B cell (primary cell): ENCODE measurements at regions of chr17 and their contacts with region 1.

Region 1: GRCh38 chr17:47323382-47324222 is at the start of gene EFCAB13:
- DNase-seq: peak; percentile 95
- ATAC-seq: peak; percentile 81
- H3K4me3 ChIP-seq: peak within 1 kb of the TSS; percentile 74 to 99 (median 91)
- H3K4me3 Mint-ChIP-seq: peak within 1 kb of the TSS; percentile 100
- H3K27ac ChIP-seq: peak within 1 kb of the TSS; percentile 97 to 99
- H3K27ac Mint-ChIP-seq: peak within 1 kb of the TSS; percentile 99
- H3K4me1 ChIP-seq: peaks cover 11 to 15% of the 10 kb centered on the region in 2 donors
- H3K4me1 Mint-ChIP-seq: peaks cover 25% of the 10 kb centered on the region
- H3K27me3 ChIP-seq: no peaks in the 10 kb centered on the region
- H3K27me3 Mint-ChIP-seq: no peaks in the 10 kb centered on the region
- CTCF ChIP-seq: peak; percentile 45
- total RNA-seq, gene EFCAB13: 86.5 and 88.4 TPM in 2 replicates

Region 2: GRCh38 chr17:46922804-46923635 is 400.6 kb before region 1 on chr17 and contains the start of gene GOSR2:
- CTCF ChIA-PET with region 1: no interaction called
- POLR2A ChIA-PET with region 1: no interaction called
- intact Hi-C with region 1: loop called (anchors 5 kb)
- DNase-seq: peak; percentile 98
- ATAC-seq: peak; percentile 94
- H3K4me3 ChIP-seq: peak within 1 kb of the TSS; percentile 87 to 98 (median 97)
- H3K4me3 Mint-ChIP-seq: peak within 1 kb of the TSS; percentile 98
- H3K27ac ChIP-seq: peak within 1 kb of the TSS; percentile 94 to 98
- H3K27ac Mint-ChIP-seq: peak within 1 kb of the TSS; percentile 100
- H3K4me1 ChIP-seq: peaks cover 16% of the 10 kb centered on the region in 2 donors
- H3K4me1 Mint-ChIP-seq: peaks cover 55% of the 10 kb centered on the region
- H3K27me3 ChIP-seq: no peaks in the 10 kb centered on the region
- H3K27me3 Mint-ChIP-seq: no peaks in the 10 kb centered on the region
- CTCF ChIP-seq: no peak
- total RNA-seq, gene GOSR2: 91.0 and 95.2 TPM in 2 replicates

Region 3: DNA sequence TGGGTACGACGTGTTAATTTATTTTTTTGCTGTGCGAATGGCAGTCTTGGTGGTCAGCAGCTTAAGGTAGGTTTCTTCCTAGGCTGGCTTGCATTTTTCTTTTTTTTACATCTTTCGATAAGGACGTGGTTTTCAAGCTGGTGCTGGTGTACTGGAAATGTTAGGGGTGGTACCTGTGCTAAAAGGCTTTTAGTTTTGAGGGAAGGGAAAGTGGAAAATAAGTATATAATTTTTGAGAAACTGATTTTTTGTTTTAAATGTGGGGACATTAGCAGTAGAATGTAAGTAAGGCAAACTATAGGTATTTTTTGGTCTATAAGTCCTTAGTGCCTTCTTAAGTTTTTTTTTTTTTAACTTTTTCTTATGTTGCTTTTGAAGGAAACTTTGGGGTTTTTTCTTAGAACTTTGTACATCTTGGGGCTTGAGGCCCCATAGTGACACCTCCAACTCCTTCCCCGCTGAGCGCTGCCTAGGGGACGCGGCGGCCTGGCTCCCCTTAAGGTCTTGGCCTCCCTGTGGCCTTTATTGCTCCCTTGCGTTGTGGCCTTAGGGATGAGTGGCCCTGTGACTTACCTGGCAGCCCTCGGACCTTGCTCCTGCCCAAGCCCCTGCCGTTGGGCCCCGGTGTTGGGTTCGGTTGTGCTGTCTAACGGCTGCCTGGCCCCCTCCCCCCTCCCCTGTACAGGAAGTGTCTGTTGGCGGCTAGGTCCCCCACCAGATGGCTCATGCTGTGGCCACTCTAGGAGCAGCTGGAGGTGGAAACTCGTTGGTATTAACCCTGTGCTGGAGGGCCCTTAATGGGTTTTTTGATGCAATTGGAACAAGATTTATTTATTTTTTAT is 256.5 kb before region 1 on chr17:
- CTCF ChIA-PET with region 1: no interaction called
- POLR2A ChIA-PET with region 1: no interaction called
- intact Hi-C with region 1: loop called (anchors 5 kb)
- DNase-seq: peak; percentile 91
- ATAC-seq: peak; percentile 99
- H3K4me3 ChIP-seq: peak overlapping the region; percentile 65 to 95 (median 90)
- H3K4me3 Mint-ChIP-seq: peak overlapping the region; percentile 98
- H3K27ac ChIP-seq: peak overlapping the region; percentile 75 to 93
- H3K27ac Mint-ChIP-seq: peak overlapping the region; percentile 97
- H3K4me1 ChIP-seq: peaks cover 11 to 12% of the 10 kb centered on the region in 2 donors
- H3K4me1 Mint-ChIP-seq: peaks cover 36% of the 10 kb centered on the region
- H3K27me3 ChIP-seq: no peaks in the 10 kb centered on the region
- H3K27me3 Mint-ChIP-seq: no peaks in the 10 kb centered on the region
- CTCF ChIP-seq: no peak

Region 4: DNA sequence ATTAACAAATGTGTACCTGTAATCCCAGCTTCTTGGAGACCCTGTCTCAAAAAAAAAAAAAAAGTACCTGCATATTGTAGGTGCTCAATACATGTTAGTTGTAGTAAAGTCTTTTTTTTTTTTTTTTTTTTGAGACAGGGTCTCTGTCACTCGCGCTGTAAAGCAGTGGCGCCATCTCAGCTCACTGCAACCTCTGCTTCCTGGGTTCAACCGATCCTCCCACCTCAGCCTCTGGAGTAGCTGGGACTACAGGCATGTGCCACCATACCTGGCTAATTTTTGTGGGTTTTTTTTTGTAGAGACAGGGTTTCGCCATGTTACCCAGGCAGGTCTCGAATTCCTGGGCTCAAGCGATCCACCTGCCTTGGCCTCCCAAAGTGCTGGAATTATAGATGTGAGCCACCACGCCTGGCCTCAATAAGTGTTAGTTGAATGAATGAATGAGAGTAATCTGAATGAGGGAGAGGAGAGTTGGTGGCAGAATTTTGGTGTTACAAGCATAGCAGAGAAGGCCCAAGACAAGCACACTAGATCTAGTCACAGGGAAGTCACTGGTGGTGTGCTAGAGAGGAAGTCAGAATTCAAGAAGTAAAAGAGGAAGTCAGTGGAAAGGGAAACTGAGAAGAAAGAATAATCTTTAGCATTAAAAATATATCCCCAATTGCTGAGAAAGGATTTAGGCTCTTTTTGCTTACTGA is 123.8 kb before region 1 on chr17:
- CTCF ChIA-PET with region 1: interaction called, 3 read pairs
- POLR2A ChIA-PET with region 1: interaction called, 3 read pairs
- intact Hi-C with region 1: loop called (anchors 1 kb)
- DNase-seq: peak; percentile 79
- ATAC-seq: peak; percentile 67
- H3K4me3 ChIP-seq: peak overlapping the region; percentile 21 to 45 (median 41)
- H3K4me3 Mint-ChIP-seq: peak overlapping the region; percentile 80
- H3K27ac ChIP-seq: peak overlapping the region; percentile 82 to 90
- H3K27ac Mint-ChIP-seq: peak overlapping the region; percentile 96
- H3K4me1 ChIP-seq: peaks cover 40 to 46% of the 10 kb centered on the region in 2 donors
- H3K4me1 Mint-ChIP-seq: peaks cover 42% of the 10 kb centered on the region
- H3K27me3 ChIP-seq: no peaks in the 10 kb centered on the region
- H3K27me3 Mint-ChIP-seq: no peaks in the 10 kb centered on the region
- CTCF ChIP-seq: no peak

Region 5: DNA sequence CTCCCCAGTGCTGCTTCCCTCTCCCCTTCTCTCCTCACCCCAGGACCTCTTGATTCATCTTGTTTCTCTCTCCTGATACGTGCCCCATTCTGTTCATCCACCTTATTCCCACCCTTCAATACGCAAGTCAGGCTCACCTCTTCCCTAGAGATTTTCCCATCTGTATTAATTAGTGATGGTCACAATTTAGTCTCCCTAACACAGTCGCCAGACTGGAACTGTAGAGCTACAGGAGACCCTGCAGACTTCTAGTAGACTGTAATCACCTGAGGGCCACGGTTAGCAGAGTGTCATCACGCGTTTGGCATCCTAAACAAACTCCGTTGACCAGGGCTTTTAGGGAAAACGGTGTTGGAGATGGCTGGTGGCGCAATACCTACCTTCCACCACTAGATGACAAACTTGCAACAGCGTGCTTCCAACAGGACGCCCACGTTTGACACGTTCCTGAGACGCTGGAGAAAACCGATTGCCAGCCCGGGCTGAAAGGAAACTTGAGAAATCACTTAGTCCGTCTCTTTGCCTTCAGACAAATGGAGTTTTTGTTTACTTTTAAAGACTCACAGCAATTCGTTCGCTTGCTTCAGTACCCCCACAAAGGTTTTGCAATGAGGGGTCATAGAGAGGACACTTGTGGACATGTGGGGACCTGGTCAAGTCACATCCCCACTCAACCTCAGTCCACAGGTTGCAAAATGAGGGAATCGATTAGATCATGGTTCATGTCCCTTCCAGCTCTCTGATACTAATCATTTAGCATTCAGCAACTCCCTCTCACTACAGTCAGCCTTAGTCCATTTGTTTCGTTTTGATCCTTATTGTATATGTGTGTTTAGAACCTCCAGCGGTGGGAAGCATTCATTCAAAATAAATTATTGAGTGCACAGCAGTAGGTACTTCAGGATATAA is 93.8 kb before region 1 on chr17:
- CTCF ChIA-PET with region 1: interaction called, 37 read pairs
- POLR2A ChIA-PET with region 1: interaction called, 3 read pairs
- intact Hi-C with region 1: no loop called
- DNase-seq: peak; percentile 86
- ATAC-seq: peak; percentile 92
- H3K4me3 ChIP-seq: peak overlapping the region; percentile 6 to 42 (median 35)
- H3K4me3 Mint-ChIP-seq: peak overlapping the region; percentile 77
- H3K27ac ChIP-seq: no peak overlapping the region
- H3K27ac Mint-ChIP-seq: peak overlapping the region; percentile 57
- H3K4me1 ChIP-seq: peaks cover 22 to 23% of the 10 kb centered on the region in 2 donors
- H3K4me1 Mint-ChIP-seq: peaks cover 28% of the 10 kb centered on the region
- H3K27me3 ChIP-seq: no peaks in the 10 kb centered on the region
- H3K27me3 Mint-ChIP-seq: no peaks in the 10 kb centered on the region
- CTCF ChIP-seq: peak; percentile 97

Region 6: DNA sequence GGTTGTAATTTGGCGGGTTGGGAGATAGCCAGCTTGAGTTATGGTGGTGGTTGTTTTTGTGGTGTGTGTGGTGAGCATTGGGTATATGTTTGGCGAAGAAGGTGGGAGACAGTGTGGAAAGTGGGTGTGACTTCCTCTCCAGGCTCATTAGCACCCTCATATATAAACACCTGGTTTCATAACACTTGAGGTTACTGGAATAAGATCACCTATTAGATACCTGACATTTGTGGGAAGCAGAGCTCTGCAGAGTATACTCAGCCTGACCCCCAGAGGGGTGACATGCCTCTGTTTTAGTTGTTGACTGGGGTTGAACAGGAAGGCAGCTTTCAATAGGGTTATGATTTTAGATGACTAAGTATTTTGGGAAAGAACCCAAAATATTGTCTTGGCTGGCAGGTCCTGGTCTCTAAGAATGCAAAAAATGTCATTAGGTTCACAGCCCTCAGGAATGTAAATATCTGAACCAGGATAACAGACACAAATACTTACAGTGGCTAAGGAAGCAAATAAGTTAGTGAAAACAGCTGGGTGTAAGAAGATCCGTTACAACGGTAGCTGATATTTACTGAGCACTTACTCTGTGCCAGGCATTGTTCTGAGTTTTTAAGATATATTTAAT is 18.2 kb before region 1 on chr17:
- CTCF ChIA-PET with region 1: no interaction called
- POLR2A ChIA-PET with region 1: no interaction called
- intact Hi-C with region 1: no loop called
- DNase-seq: no peak
- ATAC-seq: no peak
- H3K4me3 ChIP-seq: no peak overlapping the region
- H3K4me3 Mint-ChIP-seq: no peak overlapping the region
- H3K27ac ChIP-seq: no peak overlapping the region
- H3K27ac Mint-ChIP-seq: no peak overlapping the region
- H3K4me1 ChIP-seq: peaks cover 6% of the 10 kb centered on the region in 2 donors
- H3K4me1 Mint-ChIP-seq: peaks cover 12% of the 10 kb centered on the region
- H3K27me3 ChIP-seq: no peaks in the 10 kb centered on the region
- H3K27me3 Mint-ChIP-seq: no peaks in the 10 kb centered on the region
- CTCF ChIP-seq: no peak

Region 7: GRCh38 chr17:47633996-47634395 is 310.4 kb after region 1 on chr17:
- CTCF ChIA-PET with region 1: no interaction called
- POLR2A ChIA-PET with region 1: no interaction called
- intact Hi-C with region 1: no loop called
- DNase-seq: no peak
- ATAC-seq: no peak
- H3K4me3 ChIP-seq: no peak overlapping the region
- H3K4me3 Mint-ChIP-seq: no peak overlapping the region
- H3K27ac ChIP-seq: no peak overlapping the region
- H3K27ac Mint-ChIP-seq: no peak overlapping the region
- H3K4me1 ChIP-seq: no peaks in the 10 kb centered on the region
- H3K4me1 Mint-ChIP-seq: no peaks in the 10 kb centered on the region
- H3K27me3 ChIP-seq: no peaks in the 10 kb centered on the region
- H3K27me3 Mint-ChIP-seq: no peaks in the 10 kb centered on the region
- CTCF ChIP-seq: no peak

Region 8: GRCh38 chr17:47649153-47649971 is 325.8 kb after region 1 on chr17 and contains the start of gene KPNB1:
- CTCF ChIA-PET with region 1: no interaction called
- POLR2A ChIA-PET with region 1: interaction called, 10 read pairs
- intact Hi-C with region 1: no loop called
- DNase-seq: peak; percentile 99
- ATAC-seq: peak; percentile 79
- H3K4me3 ChIP-seq: peak within 1 kb of the TSS; percentile 76 to 93 (median 83)
- H3K4me3 Mint-ChIP-seq: peak within 1 kb of the TSS; percentile 98
- H3K27ac ChIP-seq: peak within 1 kb of the TSS; percentile 76 to 84
- H3K27ac Mint-ChIP-seq: peak within 1 kb of the TSS; percentile 98
- H3K4me1 ChIP-seq: peaks cover 32% of the 10 kb centered on the region in 2 donors
- H3K4me1 Mint-ChIP-seq: peaks cover 44% of the 10 kb centered on the region
- H3K27me3 ChIP-seq: no peaks in the 10 kb centered on the region
- H3K27me3 Mint-ChIP-seq: no peaks in the 10 kb centered on the region
- CTCF ChIP-seq: no peak
- total RNA-seq, gene KPNB1: 269 and 278 TPM in 2 replicates